ENCODE measurements at regions of chr1 and their contacts with region 1.

Region 1: DNA sequence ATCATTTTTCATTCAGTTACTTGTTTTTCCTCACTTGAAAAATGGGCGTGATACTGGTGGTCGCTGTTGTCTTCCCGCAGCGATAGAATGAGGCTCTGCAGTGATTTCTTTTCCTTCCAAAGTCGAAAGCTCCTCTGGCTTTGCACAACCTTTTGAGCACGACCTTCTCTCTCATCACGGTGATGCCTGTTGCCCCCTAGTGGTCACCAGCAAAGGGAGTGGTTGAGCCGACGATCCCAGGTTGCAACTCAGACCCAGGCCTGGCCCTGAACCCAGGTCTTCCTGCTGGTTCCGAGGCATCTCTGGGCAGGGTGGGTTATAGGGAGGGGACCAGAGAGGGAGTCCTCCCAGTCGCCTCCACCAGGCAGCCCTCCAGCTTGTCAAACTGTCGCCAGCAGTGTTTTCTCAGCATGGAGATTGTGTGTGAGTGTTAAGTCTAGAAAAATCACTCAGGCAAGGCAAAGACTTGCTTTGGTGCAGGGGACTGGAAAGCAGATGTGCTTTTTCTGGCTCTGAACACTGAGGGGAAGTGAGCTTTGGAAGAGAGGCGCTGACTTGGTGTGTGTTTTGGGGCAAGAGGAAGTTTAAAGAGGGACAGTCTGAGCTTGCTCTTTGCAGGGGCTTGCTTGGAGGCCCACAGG is 285.3 kb downstream of the CAMTA1 start:
- DNase-seq: no peak
- H3K4me3 ChIP-seq: peak overlapping the region in 6 of 8 donors; percentile 3 to 56 (median 22)
- H3K27ac ChIP-seq: no peak overlapping the region
- H3K4me1 ChIP-seq: peaks cover 0 to 12% (median 9%) of the 10 kb centered on the region in 6 donors
- H3K27me3 ChIP-seq: peaks cover 0 to 27% (median 0%) of the 10 kb centered on the region in 7 donors
- CTCF ChIP-seq: peak; percentile 13 to 81 (median 69)
- POLR2A ChIP-seq: no peak

Region 2: GRCh38 chr1:6795661-6796060 is 274.8 kb before region 1 on chr1:
- intact Hi-C with region 1: loop called (anchors 5 kb)
- DNase-seq: no peak
- H3K4me3 ChIP-seq: no peak overlapping the region
- H3K27ac ChIP-seq: peak overlapping the region in 3 of 8 donors; percentile 6 to 55 (median 11)
- H3K4me1 ChIP-seq: peaks cover 12 to 84% (median 37%) of the 10 kb centered on the region in 6 donors
- H3K27me3 ChIP-seq: no peaks in the 10 kb centered on the region
- CTCF ChIP-seq: no peak
- POLR2A ChIP-seq: no peak

Measured in spleen (tissue), 13 donors.